Naive thymus-derived CD8-positive, alpha-beta T cell (primary cell): ENCODE measurements at regions of chr10 and their contacts with region 1.

Region 1: GRCh38 chr10:74176380-74177139 is 25.5 kb downstream of the ADK start:
- DNase-seq: peak; percentile 90 to 97 (median 95)
- ATAC-seq: peak; percentile 94 to 95
- H3K4me3 Mint-ChIP-seq: peak overlapping the region; percentile 88 to 96 (median 92)
- H3K27ac Mint-ChIP-seq: peak overlapping the region; percentile 97 to 99 (median 98)
- H3K4me1 Mint-ChIP-seq: peaks cover 12 to 48% (median 44%) of the 10 kb centered on the region in 4 donors
- H3K27me3 Mint-ChIP-seq: no peaks in the 10 kb centered on the region

Region 2: DNA sequence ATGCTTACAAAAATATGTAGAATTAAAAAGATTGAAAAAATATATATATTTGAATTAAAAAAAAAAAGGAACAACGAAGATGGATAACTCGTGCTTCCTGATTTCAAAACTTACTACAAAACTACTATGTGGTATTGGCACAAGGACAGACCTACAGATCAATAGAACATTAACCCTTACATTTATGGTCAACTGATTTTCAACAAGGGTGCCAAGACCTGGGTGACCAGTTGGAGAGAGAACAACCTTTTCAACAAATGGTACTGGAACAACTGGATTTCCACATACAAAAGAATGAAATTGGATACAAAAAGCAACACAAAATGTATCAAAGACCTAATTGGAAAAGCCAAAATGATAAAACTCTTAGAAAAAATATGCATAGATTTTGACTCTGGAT is 36.0 kb before region 1 on chr10:
- POLR2A ChIA-PET with region 1: no interaction called
- DNase-seq: no peak
- ATAC-seq: no peak
- H3K4me3 Mint-ChIP-seq: no peak overlapping the region
- H3K27ac Mint-ChIP-seq: peak overlapping the region in 1 of 10 donors; percentile 55
- H3K4me1 Mint-ChIP-seq: peaks cover 6 to 24% (median 14%) of the 10 kb centered on the region in 4 donors
- H3K27me3 Mint-ChIP-seq: no peaks in the 10 kb centered on the region

Region 3: DNA sequence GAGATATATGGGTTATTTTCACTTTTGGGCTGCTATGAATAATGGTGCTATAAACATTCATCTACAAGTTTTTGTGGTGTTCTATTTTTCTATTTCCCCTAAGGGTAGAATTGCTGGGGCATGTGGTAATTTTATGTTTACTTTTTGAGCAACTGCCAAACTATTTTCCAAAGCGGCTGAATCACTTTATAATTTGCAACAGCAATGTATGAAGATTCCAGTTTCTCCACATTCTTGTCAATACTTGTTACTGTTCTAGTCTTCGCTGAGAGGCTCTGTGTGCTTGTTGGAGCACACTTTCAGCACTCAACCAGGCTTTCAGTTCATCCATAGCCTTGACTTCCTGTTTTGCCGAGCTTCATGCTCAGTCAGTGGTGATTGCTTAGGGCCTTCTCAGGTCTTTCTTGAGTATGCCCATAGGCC is 13.4 kb after region 1 on chr10:
- POLR2A ChIA-PET with region 1: interaction called, 31 read pairs
- DNase-seq: peak in 2 of 10 donors; percentile 38 to 51
- ATAC-seq: peak; percentile 55 to 86
- H3K4me3 Mint-ChIP-seq: peak overlapping the region; percentile 26 to 81 (median 72)
- H3K27ac Mint-ChIP-seq: peak overlapping the region; percentile 87 to 99 (median 92)
- H3K4me1 Mint-ChIP-seq: peaks cover 23 to 78% (median 63%) of the 10 kb centered on the region in 4 donors
- H3K27me3 Mint-ChIP-seq: no peaks in the 10 kb centered on the region